Activated naive CD4-positive, alpha-beta T cell treated with anti-CD3 and anti-CD28 coated beads for 36 hours (primary cell): ENCODE measurements at regions of chr7 and their contacts with region 1.

Region 1: GRCh38 chr7:138459413-138460175 is 465 bp upstream of the TRIM24 start:
- DNase-seq: peak; percentile 98
- H3K4me3 Mint-ChIP-seq: peak overlapping the region; percentile 94
- H3K27ac Mint-ChIP-seq: peak overlapping the region; percentile 63
- H3K4me1 Mint-ChIP-seq: peaks cover 22% of the 10 kb centered on the region
- H3K27me3 Mint-ChIP-seq: no peaks in the 10 kb centered on the region

Region 2: DNA sequence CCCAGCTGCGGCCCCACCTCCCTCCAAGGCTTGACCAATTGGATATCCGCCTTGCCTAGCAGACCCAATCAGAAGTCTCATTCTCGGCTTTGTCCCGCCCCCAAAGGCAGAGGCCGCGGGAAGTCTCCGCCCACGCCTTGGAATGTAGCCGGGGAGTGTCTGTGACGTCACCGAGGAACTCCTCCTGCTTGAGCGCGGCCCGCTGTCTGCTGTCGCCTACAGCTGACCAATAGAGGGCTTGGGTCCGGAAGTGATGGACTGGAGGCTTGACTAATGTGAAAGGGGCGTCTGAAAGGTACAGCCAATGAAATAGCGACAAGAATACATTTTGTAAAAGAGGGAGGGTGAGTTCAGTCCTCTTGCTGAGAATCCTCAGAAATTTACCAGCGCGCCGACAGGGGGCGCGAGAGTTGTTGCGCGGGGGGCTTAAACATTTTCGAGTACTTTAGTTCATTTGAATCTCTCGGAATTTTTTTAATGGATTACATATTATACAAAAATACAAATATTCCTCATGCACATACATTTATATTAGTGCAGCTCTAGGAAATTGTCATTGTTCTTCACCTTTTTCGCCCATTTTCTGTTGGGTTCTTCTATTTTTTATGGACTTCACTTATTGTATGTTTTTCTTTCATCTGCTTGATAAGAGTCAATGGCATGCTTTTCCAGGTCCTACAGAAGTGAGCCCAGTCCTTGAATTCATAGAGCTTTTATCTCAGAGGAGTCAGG is 457.3 kb before region 1 on chr7:
- CTCF ChIA-PET with region 1: no interaction called
- intact Hi-C with region 1: loop called (anchors 1 kb)
- DNase-seq: peak; percentile 98
- H3K4me3 Mint-ChIP-seq: peak overlapping the region; percentile 91
- H3K27ac Mint-ChIP-seq: peak overlapping the region; percentile 76
- H3K4me1 Mint-ChIP-seq: peaks cover 25% of the 10 kb centered on the region
- H3K27me3 Mint-ChIP-seq: no peaks in the 10 kb centered on the region

Region 3: DNA sequence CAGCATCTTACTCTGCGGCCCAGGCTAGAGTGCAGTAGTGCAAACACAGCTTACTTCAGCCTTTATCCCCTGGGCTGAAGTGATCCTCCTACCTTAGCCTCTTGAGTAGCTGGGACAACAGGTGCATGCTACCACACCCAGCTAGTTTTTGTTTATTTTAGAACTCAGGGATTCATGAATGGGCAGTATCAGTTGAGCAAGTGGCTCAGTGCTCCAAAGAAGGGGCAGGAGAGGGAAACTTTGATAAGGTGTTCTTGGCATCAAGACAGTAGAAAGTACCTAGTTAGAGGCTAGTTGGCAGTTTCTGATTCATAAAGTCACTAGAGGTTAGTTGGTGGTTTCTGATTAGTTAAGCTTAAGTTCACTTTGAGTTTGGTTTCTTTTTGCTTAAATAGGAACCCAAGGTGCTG is 18.9 kb after region 1 on chr7:
- CTCF ChIA-PET with region 1: interaction called, 3 read pairs
- intact Hi-C with region 1: loop called (anchors 1 kb)
- DNase-seq: no peak
- H3K4me3 Mint-ChIP-seq: no peak overlapping the region
- H3K27ac Mint-ChIP-seq: peak overlapping the region; percentile 22
- H3K4me1 Mint-ChIP-seq: peaks cover 57% of the 10 kb centered on the region
- H3K27me3 Mint-ChIP-seq: no peaks in the 10 kb centered on the region

Region 4: DNA sequence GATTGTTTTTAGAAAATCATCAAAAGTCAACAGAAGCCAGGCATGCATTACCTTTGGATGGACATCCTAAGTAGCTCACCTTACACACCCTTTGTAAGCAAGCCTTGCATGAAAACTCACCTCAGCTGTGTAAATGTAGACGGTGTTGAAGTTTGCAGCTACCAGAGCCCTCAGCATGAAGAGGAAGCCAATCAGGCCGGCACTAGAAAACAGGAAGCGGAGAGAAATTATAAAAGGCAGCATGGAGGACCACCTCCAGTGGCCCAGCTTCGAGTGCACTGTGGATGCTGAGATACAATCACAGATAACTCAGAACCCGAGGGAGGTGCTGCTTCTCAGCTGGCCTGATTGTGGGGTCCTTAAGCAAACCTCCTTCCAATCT is 166.2 kb after region 1 on chr7:
- CTCF ChIA-PET with region 1: no interaction called
- intact Hi-C with region 1: loop called (anchors 1 kb)
- DNase-seq: peak; percentile 38
- H3K4me3 Mint-ChIP-seq: no peak overlapping the region
- H3K27ac Mint-ChIP-seq: peak overlapping the region; percentile 72
- H3K4me1 Mint-ChIP-seq: peaks cover 43% of the 10 kb centered on the region
- H3K27me3 Mint-ChIP-seq: no peaks in the 10 kb centered on the region

Region 5: DNA sequence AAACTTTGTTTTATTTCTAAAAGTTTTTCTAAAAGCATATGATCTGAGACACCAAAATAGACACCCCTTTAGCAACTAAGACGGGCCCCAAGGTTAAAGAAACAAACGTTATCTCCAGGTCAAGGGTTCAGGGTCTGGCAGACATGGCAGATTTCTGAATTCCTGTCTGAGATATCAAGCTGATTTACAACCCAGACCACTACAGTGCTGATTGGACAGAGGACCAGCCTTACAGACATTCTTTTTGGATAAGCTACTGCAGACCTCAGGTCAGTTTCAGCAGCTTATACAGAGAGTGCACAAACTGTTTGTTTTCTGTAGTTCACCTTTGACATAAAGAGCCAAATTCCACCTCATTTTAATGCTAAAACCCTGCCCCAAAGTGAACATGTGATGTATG is 206.8 kb after region 1 on chr7:
- CTCF ChIA-PET with region 1: no interaction called
- intact Hi-C with region 1: no loop called
- DNase-seq: no peak
- H3K4me3 Mint-ChIP-seq: no peak overlapping the region
- H3K27ac Mint-ChIP-seq: no peak overlapping the region
- H3K4me1 Mint-ChIP-seq: peaks cover 15% of the 10 kb centered on the region
- H3K27me3 Mint-ChIP-seq: peaks cover 29% of the 10 kb centered on the region

Region 6: GRCh38 chr7:138865843-138866242 is 406.2 kb after region 1 on chr7:
- CTCF ChIA-PET with region 1: interaction called, 3 read pairs
- intact Hi-C with region 1: loop called (anchors 5 kb)
- DNase-seq: peak; percentile 67
- H3K4me3 Mint-ChIP-seq: no peak overlapping the region
- H3K27ac Mint-ChIP-seq: no peak overlapping the region
- H3K4me1 Mint-ChIP-seq: peaks cover 19% of the 10 kb centered on the region
- H3K27me3 Mint-ChIP-seq: no peaks in the 10 kb centered on the region

Region 7: GRCh38 chr7:139230774-139231512 is 771.3 kb after region 1 on chr7 and contains the start of gene UBN2:
- CTCF ChIA-PET with region 1: no interaction called
- intact Hi-C with region 1: loop called (anchors 1 kb)
- DNase-seq: peak; percentile 95
- H3K4me3 Mint-ChIP-seq: peak within 1 kb of the TSS; percentile 90
- H3K27ac Mint-ChIP-seq: peak within 1 kb of the TSS; percentile 75
- H3K4me1 Mint-ChIP-seq: peaks cover 20% of the 10 kb centered on the region
- H3K27me3 Mint-ChIP-seq: no peaks in the 10 kb centered on the region
- total RNA-seq, gene UBN2: 9.7 to 10.6 TPM